MCF 10A (cell line): ENCODE measurements at regions of chr6 and their contacts with region 1.

Region 1: GRCh38 chr6:5398530-5398929 is 137.2 kb downstream of the FARS2 start:
- DNase-seq: peak; percentile 59
- H3K4me3 Mint-ChIP-seq: no peak overlapping the region
- H3K27ac Mint-ChIP-seq: no peak overlapping the region
- H3K4me1 Mint-ChIP-seq: peaks cover 7% of the 10 kb centered on the region
- H3K27me3 Mint-ChIP-seq: no peaks in the 10 kb centered on the region
- CTCF ChIP-seq: peak; percentile 63

Region 2: DNA sequence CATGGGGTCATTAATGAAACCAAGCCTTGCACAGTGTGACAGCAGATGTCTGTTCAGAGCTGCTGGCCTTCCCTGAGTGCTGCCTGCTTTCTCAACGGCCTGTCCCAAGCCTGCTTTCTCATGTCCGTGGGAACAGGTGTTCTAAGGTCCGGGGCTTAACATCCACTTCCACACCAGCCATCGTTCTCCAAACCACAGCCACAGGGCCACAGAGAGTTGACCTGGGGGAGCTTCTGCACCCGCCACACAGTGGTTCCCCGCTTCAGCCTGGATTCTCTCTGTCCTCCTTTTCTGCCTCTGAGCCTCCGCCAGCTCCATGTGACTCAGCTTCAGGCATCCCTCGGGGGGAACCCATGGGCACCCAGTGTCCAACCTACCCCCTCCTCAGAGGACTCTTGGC is 340.3 kb before region 1 on chr6:
- CTCF ChIA-PET with region 1: no interaction called
- POLR2A ChIA-PET with region 1: no interaction called
- intact Hi-C with region 1: loop called (anchors 5 kb)
- DNase-seq: no peak
- H3K4me3 Mint-ChIP-seq: no peak overlapping the region
- H3K27ac Mint-ChIP-seq: no peak overlapping the region
- H3K4me1 Mint-ChIP-seq: peaks cover 7% of the 10 kb centered on the region
- H3K27me3 Mint-ChIP-seq: no peaks in the 10 kb centered on the region
- CTCF ChIP-seq: no peak

Region 3: GRCh38 chr6:5214570-5215052 is 183.9 kb before region 1 on chr6:
- CTCF ChIA-PET with region 1: interaction called, 4 read pairs
- POLR2A ChIA-PET with region 1: no interaction called
- intact Hi-C with region 1: loop called (anchors 5 kb)
- DNase-seq: peak; percentile 38
- H3K4me3 Mint-ChIP-seq: no peak overlapping the region
- H3K27ac Mint-ChIP-seq: no peak overlapping the region
- H3K4me1 Mint-ChIP-seq: no peaks in the 10 kb centered on the region
- H3K27me3 Mint-ChIP-seq: no peaks in the 10 kb centered on the region
- CTCF ChIP-seq: peak; percentile 71